ENCODE measurements at regions of chr11 and their contacts with region 1.

Region 1: DNA sequence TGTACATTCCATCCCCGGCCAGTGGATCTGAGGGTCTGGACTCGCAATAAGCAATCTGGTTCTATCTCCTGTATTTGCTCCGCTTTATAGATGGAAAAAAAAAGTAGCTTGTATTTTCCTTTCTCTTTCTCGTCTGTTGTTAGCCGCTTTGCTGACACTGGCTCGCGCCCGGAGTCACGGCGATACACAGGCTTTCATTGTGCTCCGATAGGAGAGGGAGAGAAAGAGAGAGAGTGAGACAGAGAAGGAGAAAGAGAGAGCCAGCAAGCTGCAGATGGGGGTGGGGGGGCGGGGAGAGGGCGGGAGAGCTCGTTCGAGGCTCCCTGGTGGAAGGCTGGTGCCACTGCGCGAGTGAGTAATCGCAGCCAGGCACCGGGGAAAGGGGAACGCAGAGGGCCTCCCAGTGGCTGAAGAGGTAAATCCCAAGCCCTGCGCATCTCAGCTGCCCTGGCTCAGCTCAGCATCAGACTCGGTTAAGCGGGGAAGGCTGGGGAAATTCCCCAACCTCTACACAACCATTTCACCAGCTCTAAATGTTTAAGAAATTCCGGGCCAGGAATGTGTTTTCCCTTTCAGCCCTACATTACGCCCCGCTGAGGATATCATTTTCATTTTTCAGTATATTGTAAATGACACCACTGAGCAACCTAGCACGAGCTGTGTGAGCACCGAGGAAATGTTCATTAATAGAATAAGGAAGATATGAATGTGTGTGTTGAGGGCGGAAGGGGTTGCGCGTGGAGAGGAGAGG is at the start of gene MAML2:
- DNase-seq: peak; percentile 92 to 95 (median 93)
- ATAC-seq: peak; percentile 88 to 97 (median 94)
- H3K4me3 ChIP-seq: peak within 1 kb of the TSS; percentile 54 to 80 (median 71)
- H3K27ac ChIP-seq: peak within 1 kb of the TSS in 11 of 12 donors; percentile 74 to 92 (median 79)
- H3K4me1 ChIP-seq: peaks cover 0 to 45% (median 28%) of the 10 kb centered on the region in 12 donors
- H3K27me3 ChIP-seq: no peaks in the 10 kb centered on the region
- CTCF ChIP-seq: peak; percentile 85 to 99 (median 96)
- POLR2A ChIP-seq: no peak
- total RNA-seq, gene MAML2: 2.1 to 10.8 (median 6.1) TPM

Region 2: GRCh38 chr11:95849087-95849825 is 493.9 kb before region 1 on chr11:
- intact Hi-C with region 1: loop called in 3 of 10 experiments (anchors 5 to 10 kb)
- DNase-seq: peak in 4 of 5 donors; percentile 40 to 50 (median 42)
- ATAC-seq: peak; percentile 78 to 98 (median 95)
- H3K4me3 ChIP-seq: no peak overlapping the region
- H3K27ac ChIP-seq: peak overlapping the region in 6 of 12 donors; percentile 3 to 40 (median 10)
- H3K4me1 ChIP-seq: peaks cover 0 to 8% (median 2%) of the 10 kb centered on the region in 12 donors
- H3K27me3 ChIP-seq: no peaks in the 10 kb centered on the region
- CTCF ChIP-seq: peak; percentile 31 to 69 (median 52)
- POLR2A ChIP-seq: no peak

Region 3: GRCh38 chr11:96012086-96012824 is 330.9 kb before region 1 on chr11:
- intact Hi-C with region 1: loop called in 1 of 10 experiments (anchors 5 kb)
- DNase-seq: peak in 2 of 5 donors; percentile 22 to 44
- ATAC-seq: peak; percentile 46 to 88 (median 78)
- H3K4me3 ChIP-seq: peak overlapping the region in 1 of 12 donors; percentile 23
- H3K27ac ChIP-seq: peak overlapping the region in 7 of 12 donors; percentile 21 to 52 (median 33)
- H3K4me1 ChIP-seq: peaks cover 0 to 41% (median 4%) of the 10 kb centered on the region in 12 donors
- H3K27me3 ChIP-seq: no peaks in the 10 kb centered on the region
- CTCF ChIP-seq: peak in 10 of 12 donors; percentile 9 to 63 (median 44)
- POLR2A ChIP-seq: no peak

Region 4: GRCh38 chr11:96168623-96169022 is 174.5 kb before region 1 on chr11:
- intact Hi-C with region 1: loop called in 3 of 10 experiments (anchors 5 kb)
- DNase-seq: peak in 3 of 5 donors; percentile 18 to 38 (median 32)
- ATAC-seq: peak; percentile 39 to 89 (median 80)
- H3K4me3 ChIP-seq: no peak overlapping the region
- H3K27ac ChIP-seq: peak overlapping the region in 9 of 12 donors; percentile 12 to 82 (median 36)
- H3K4me1 ChIP-seq: peaks cover 0 to 61% (median 15%) of the 10 kb centered on the region in 12 donors
- H3K27me3 ChIP-seq: no peaks in the 10 kb centered on the region
- CTCF ChIP-seq: no peak
- POLR2A ChIP-seq: no peak

Region 5: GRCh38 chr11:96242971-96243647 is 100.0 kb before region 1 on chr11:
- intact Hi-C with region 1: loop called in 4 of 10 experiments (anchors 2 to 5 kb)
- DNase-seq: peak; percentile 92 to 96 (median 95)
- ATAC-seq: peak; percentile 98 to 100 (median 100)
- H3K4me3 ChIP-seq: peak overlapping the region; percentile 9 to 63 (median 52)
- H3K27ac ChIP-seq: peak overlapping the region; percentile 14 to 91 (median 78)
- H3K4me1 ChIP-seq: peaks cover 0 to 47% (median 16%) of the 10 kb centered on the region in 12 donors
- H3K27me3 ChIP-seq: no peaks in the 10 kb centered on the region
- CTCF ChIP-seq: peak in 1 of 12 donors; percentile 6
- POLR2A ChIP-seq: peak in 1 of 2 donors; percentile 43

Region 6: GRCh38 chr11:96272529-96273222 is 70.5 kb before region 1 on chr11:
- intact Hi-C with region 1: loop called in 2 of 10 experiments (anchors 10 kb)
- DNase-seq: no peak
- ATAC-seq: no peak
- H3K4me3 ChIP-seq: no peak overlapping the region
- H3K27ac ChIP-seq: no peak overlapping the region
- H3K4me1 ChIP-seq: peaks cover 0 to 30% (median 4%) of the 10 kb centered on the region in 12 donors
- H3K27me3 ChIP-seq: no peaks in the 10 kb centered on the region
- CTCF ChIP-seq: no peak
- POLR2A ChIP-seq: no peak

Region 7: GRCh38 chr11:96524475-96524874 is 181.3 kb after region 1 on chr11:
- intact Hi-C with region 1: no loop called
- DNase-seq: no peak
- ATAC-seq: no peak
- H3K4me3 ChIP-seq: no peak overlapping the region
- H3K27ac ChIP-seq: no peak overlapping the region
- H3K4me1 ChIP-seq: peaks cover 0 to 2% (median 0%) of the 10 kb centered on the region in 12 donors
- H3K27me3 ChIP-seq: no peaks in the 10 kb centered on the region
- CTCF ChIP-seq: peak in 3 of 12 donors; percentile 21 to 35 (median 28)
- POLR2A ChIP-seq: no peak

Region 8: DNA sequence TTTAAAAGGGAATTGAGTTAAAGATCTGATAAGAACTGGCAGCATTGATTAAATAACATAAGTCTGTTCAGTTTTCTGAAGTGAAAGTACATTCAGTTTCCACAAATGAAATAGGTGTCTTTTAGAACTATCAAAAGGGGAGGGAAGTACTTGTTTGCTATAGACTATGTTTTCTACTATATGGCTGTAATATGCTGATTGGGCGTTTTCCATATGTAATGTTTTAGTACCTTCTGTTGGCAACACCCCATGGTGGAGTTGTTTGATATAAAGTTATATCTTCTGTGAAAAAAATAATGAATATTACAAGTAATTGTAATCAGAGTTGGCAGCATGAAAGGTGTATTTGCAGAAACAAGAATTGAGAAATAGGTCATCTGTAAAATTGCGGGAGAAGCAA is 284.2 kb after region 1 on chr11:
- intact Hi-C with region 1: no loop called
- DNase-seq: no peak
- ATAC-seq: no peak
- H3K4me3 ChIP-seq: no peak overlapping the region
- H3K27ac ChIP-seq: no peak overlapping the region
- H3K4me1 ChIP-seq: peaks cover 0 to 6% (median 0%) of the 10 kb centered on the region in 12 donors
- H3K27me3 ChIP-seq: no peaks in the 10 kb centered on the region
- CTCF ChIP-seq: no peak
- POLR2A ChIP-seq: no peak